ENCODE measurements at regions of chr7 and their contacts with region 1.

Region 1: GRCh38 chr7:151057989-151058780 is 488 bp upstream of the CDK5 start:
- DNase-seq: peak; percentile 97
- H3K4me3 Mint-ChIP-seq: peak overlapping the region; percentile 94
- H3K27ac Mint-ChIP-seq: peak overlapping the region; percentile 93
- H3K4me1 Mint-ChIP-seq: peaks cover 26% of the 10 kb centered on the region
- H3K27me3 Mint-ChIP-seq: no peaks in the 10 kb centered on the region

Region 2: DNA sequence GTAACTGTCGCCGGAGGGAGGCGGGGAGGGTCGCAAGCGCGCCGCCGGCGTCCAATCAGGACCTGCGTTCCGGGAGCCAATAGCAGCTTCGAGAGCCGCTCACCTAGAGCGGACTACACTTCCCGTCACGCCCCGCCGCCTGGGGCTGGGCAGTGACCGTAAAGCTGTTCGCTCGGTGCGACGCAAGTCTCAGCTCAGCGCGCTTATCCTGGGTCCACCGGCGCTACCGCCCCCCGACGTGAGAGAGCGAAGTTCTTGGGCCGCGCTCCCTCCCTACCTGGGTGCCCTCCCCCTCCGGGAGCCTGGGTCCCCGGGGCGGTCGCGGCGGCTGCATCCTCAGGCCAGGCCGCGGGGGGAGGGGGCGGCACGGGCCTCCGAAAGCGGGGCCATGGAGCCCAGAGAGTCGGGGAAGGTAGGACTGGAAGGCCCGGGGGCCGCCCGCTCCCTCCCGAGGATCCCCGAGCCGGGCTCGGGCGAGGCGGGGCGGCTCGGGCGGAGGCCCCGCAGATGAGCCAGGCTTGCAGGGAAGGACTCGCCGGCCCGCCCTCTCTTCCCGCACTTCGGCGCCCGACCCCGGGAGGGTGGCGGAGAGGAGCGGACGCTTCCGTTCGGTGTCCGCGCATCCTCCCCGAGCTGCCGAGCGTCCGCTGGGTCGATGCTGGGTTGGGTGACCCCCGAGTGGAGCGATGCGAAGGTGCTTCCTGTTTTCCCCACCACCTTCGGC is 1219.8 kb before region 1 on chr7 and contains the start of gene ZNF862:
- intact Hi-C with region 1: loop called (anchors 5 kb)
- DNase-seq: peak; percentile 95
- H3K4me3 Mint-ChIP-seq: peak within 1 kb of the TSS; percentile 88
- H3K27ac Mint-ChIP-seq: peak within 1 kb of the TSS; percentile 56
- H3K4me1 Mint-ChIP-seq: peaks cover 21% of the 10 kb centered on the region
- H3K27me3 Mint-ChIP-seq: peaks cover 11% of the 10 kb centered on the region
- total RNA-seq, gene ZNF862: 14.6 and 16.4 TPM in 2 replicates

Region 3: GRCh38 chr7:150891740-150892139 is 166.4 kb before region 1 on chr7:
- intact Hi-C with region 1: no loop called
- DNase-seq: no peak
- H3K4me3 Mint-ChIP-seq: no peak overlapping the region
- H3K27ac Mint-ChIP-seq: no peak overlapping the region
- H3K4me1 Mint-ChIP-seq: no peaks in the 10 kb centered on the region
- H3K27me3 Mint-ChIP-seq: peaks cover 21% of the 10 kb centered on the region

Region 4: GRCh38 chr7:151017953-151018420 is 40.2 kb before region 1 on chr7:
- intact Hi-C with region 1: loop called (anchors 5 kb)
- DNase-seq: peak; percentile 70
- H3K4me3 Mint-ChIP-seq: peak overlapping the region; percentile 76
- H3K27ac Mint-ChIP-seq: peak overlapping the region; percentile 42
- H3K4me1 Mint-ChIP-seq: peaks cover 37% of the 10 kb centered on the region
- H3K27me3 Mint-ChIP-seq: peaks cover 31% of the 10 kb centered on the region

Region 5: GRCh38 chr7:151028131-151028947 is 29.8 kb before region 1 on chr7 and contains the start of gene ABCB8:
- intact Hi-C with region 1: loop called (anchors 1 kb)
- DNase-seq: peak; percentile 99
- H3K4me3 Mint-ChIP-seq: peak within 1 kb of the TSS; percentile 96
- H3K27ac Mint-ChIP-seq: peak within 1 kb of the TSS; percentile 93
- H3K4me1 Mint-ChIP-seq: peaks cover 13% of the 10 kb centered on the region
- H3K27me3 Mint-ChIP-seq: peaks cover 2% of the 10 kb centered on the region
- total RNA-seq, gene ABCB8: 59.5 and 59.6 TPM in 2 replicates

Region 6: DNA sequence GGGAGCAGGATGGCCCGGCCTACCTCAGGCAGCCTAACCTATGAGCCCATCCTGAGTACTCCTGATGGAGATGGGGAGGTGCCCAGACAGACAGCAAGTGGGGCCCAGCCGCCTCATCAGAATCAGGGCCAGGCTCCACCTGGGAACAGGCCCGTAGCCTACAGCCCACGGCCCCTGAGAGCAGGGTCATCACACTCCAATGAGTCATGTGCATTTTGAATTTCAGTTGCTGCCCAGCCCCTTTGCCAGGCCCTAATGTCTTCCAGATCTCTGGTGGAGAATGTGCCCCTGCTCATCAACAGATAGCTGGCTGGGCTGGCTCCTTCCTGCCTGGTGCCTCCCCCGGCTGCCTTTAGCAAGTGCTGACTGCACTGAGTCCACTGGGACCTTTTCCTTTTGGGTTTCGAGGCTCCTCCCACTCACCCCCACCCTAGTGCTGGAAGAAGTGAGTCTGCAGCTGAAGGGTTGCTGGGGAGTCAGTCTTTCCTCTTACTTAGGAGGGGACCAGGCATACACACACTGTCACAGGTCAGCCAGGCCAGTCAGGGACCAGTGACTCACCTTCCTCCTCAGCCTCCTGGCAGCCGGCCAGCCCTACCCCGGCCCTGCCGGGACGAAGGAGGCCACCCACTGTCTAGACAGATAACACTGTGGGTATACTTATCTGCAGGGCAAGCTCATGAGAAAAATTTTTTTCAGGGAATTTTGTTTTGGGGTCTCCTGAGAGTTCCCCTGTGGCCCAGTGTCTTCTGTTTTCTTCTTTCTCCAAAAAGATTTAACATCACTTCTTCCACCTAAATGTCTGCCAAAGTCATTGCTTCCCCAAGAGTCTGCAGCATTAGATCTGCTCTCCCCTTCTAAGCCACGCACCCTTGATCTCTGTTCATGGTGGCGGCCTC is 19.0 kb before region 1 on chr7:
- intact Hi-C with region 1: loop called (anchors 1 kb)
- DNase-seq: no peak
- H3K4me3 Mint-ChIP-seq: no peak overlapping the region
- H3K27ac Mint-ChIP-seq: peak overlapping the region; percentile 91
- H3K4me1 Mint-ChIP-seq: peaks cover 15% of the 10 kb centered on the region
- H3K27me3 Mint-ChIP-seq: no peaks in the 10 kb centered on the region

Region 7: GRCh38 chr7:151080522-151081169 is 22.5 kb after region 1 on chr7 and contains the start of gene FASTK:
- intact Hi-C with region 1: loop called (anchors 1 kb)
- DNase-seq: peak; percentile 86
- H3K4me3 Mint-ChIP-seq: peak within 1 kb of the TSS; percentile 94
- H3K27ac Mint-ChIP-seq: peak within 1 kb of the TSS; percentile 75
- H3K4me1 Mint-ChIP-seq: peaks cover 22% of the 10 kb centered on the region
- H3K27me3 Mint-ChIP-seq: peaks cover 6% of the 10 kb centered on the region
- total RNA-seq, gene FASTK: 83.2 and 85.2 TPM in 2 replicates

Region 8: DNA sequence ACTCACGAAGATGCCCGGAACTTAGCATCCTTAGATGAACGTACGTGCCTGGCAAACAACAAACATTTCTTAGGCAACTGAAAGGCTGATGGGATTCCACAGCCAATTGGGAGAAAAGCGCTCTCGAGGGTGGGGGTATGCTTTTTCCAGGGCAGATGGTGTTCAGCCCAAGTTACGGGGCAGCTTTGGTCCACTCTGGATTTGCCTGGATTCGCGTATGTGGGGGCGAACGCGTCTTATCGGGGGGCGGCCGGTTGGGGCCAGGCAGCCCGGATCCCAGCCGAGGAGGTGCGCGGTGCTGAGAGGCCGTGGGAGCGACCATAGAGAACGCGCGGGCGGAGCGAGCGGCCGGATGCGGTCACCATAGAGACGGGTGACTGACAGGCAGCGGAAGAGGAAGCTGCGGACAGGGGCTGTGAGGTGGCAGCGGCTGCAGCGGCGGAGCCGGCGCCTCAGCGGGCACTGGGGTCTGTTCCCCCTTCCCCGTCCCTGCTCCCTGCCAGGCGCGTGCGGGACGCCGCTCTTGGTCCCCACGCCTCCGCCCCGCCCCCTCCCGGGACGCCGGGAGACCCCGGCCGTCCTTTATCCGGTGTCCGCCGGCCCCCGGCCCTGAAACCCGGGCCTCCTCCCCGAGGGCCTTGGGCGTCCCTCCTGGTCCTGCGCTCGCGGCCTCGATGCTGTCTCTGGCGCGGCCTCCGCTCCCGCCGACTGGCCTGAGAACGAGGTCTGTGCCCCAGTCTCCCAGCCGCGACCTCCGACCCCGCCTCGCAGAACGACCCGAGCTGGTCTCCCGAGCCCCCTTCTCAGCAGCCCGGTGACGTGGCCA is 174.1 kb after region 1 on chr7 and contains the start of gene CHPF2:
- intact Hi-C with region 1: loop called (anchors 2 kb)
- DNase-seq: peak; percentile 89
- H3K4me3 Mint-ChIP-seq: peak within 1 kb of the TSS; percentile 100
- H3K27ac Mint-ChIP-seq: peak within 1 kb of the TSS; percentile 99
- H3K4me1 Mint-ChIP-seq: peaks cover 23% of the 10 kb centered on the region
- H3K27me3 Mint-ChIP-seq: peaks cover 4% of the 10 kb centered on the region
- total RNA-seq, gene CHPF2: 43.8 and 46.0 TPM in 2 replicates